ENCODE measurements at regions of chr2 and their contacts with region 1.

Region 1: DNA sequence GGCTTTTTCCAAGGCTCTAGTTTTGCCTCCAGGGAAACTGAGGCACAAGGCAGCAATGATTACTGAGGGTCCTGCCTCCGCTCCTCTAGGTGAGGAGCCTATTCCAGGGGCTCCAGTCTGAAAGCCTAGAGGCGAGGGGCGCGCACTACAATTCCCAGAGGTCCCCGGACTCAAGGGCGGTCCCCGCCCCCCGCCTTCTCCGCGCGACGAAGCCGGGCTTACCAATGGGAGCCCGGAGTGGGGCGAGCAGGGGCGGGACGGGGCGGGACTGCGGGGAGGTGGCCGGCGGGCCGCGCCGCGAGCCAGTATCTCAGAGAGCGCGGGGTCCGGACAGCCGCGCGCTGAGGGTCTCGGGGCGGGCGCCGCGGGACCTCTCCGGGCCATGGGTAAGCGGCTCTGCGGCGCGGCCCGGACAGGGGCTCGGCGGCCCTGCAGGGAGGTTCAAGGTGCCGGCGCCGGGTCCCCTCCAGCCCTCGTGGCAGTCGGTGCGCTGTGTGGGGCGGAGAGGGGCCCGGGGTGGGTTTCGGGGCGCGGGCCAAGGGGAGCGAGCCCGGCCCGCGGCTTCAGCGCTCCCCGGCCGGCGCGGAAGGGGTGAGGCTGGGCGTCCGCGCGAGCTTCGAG is at the start of gene ARID5A:
- DNase-seq: peak; percentile 88 to 95 (median 91)
- ATAC-seq: peak; percentile 48
- H3K4me3 ChIP-seq: peak within 1 kb of the TSS; percentile 90
- H3K4me3 Mint-ChIP-seq: peak within 1 kb of the TSS; percentile 99
- H3K27ac ChIP-seq: peak within 1 kb of the TSS; percentile 88 to 99
- H3K27ac Mint-ChIP-seq: peak within 1 kb of the TSS; percentile 99
- H3K4me1 ChIP-seq: peaks cover 76% of the 10 kb centered on the region
- H3K4me1 Mint-ChIP-seq: peaks cover 60% of the 10 kb centered on the region
- H3K27me3 ChIP-seq: no peaks in the 10 kb centered on the region
- H3K27me3 Mint-ChIP-seq: no peaks in the 10 kb centered on the region
- CTCF ChIP-seq: peak; percentile 53
- total RNA-seq, gene ARID5A: 326 to 342 TPM

Region 2: GRCh38 chr2:96145036-96145847 is 391.3 kb before region 1 on chr2 and contains the start of gene DUSP2:
- CTCF ChIA-PET with region 1: no interaction called
- POLR2A ChIA-PET with region 1: interaction called, 21 read pairs
- intact Hi-C with region 1: loop called (anchors 5 kb)
- DNase-seq: peak; percentile 71 to 96 (median 85)
- ATAC-seq: peak; percentile 33
- H3K4me3 ChIP-seq: peak within 1 kb of the TSS; percentile 93
- H3K4me3 Mint-ChIP-seq: peak within 1 kb of the TSS; percentile 98
- H3K27ac ChIP-seq: peak within 1 kb of the TSS; percentile 97 to 99
- H3K27ac Mint-ChIP-seq: peak within 1 kb of the TSS; percentile 98
- H3K4me1 ChIP-seq: peaks cover 73% of the 10 kb centered on the region
- H3K4me1 Mint-ChIP-seq: peaks cover 79% of the 10 kb centered on the region
- H3K27me3 ChIP-seq: no peaks in the 10 kb centered on the region
- H3K27me3 Mint-ChIP-seq: no peaks in the 10 kb centered on the region
- CTCF ChIP-seq: no peak
- total RNA-seq, gene DUSP2: 728 to 730 TPM

Region 3: GRCh38 chr2:96305091-96305978 is 231.2 kb before region 1 on chr2 and contains the start of gene SNRNP200:
- CTCF ChIA-PET with region 1: no interaction called
- POLR2A ChIA-PET with region 1: interaction called, 18 read pairs
- intact Hi-C with region 1: loop called (anchors 2 to 5 kb)
- DNase-seq: peak; percentile 83 to 97 (median 88)
- ATAC-seq: peak; percentile 83
- H3K4me3 ChIP-seq: peak within 1 kb of the TSS; percentile 100
- H3K4me3 Mint-ChIP-seq: peak within 1 kb of the TSS; percentile 94
- H3K27ac ChIP-seq: peak within 1 kb of the TSS; percentile 97
- H3K27ac Mint-ChIP-seq: peak within 1 kb of the TSS; percentile 97
- H3K4me1 ChIP-seq: peaks cover 48% of the 10 kb centered on the region
- H3K4me1 Mint-ChIP-seq: peaks cover 58% of the 10 kb centered on the region
- H3K27me3 ChIP-seq: no peaks in the 10 kb centered on the region
- H3K27me3 Mint-ChIP-seq: no peaks in the 10 kb centered on the region
- CTCF ChIP-seq: no peak
- total RNA-seq, gene SNRNP200: 274 to 297 TPM

Region 4: GRCh38 chr2:96407041-96407918 is 129.3 kb before region 1 on chr2:
- CTCF ChIA-PET with region 1: interaction called, 8 read pairs
- POLR2A ChIA-PET with region 1: interaction called, 107 read pairs
- intact Hi-C with region 1: loop called in 1 of 2 experiments (anchors 5 kb)
- DNase-seq: peak; percentile 58 to 91 (median 76)
- ATAC-seq: peak; percentile 93
- H3K4me3 ChIP-seq: no peak overlapping the region
- H3K4me3 Mint-ChIP-seq: peak overlapping the region; percentile 79
- H3K27ac ChIP-seq: peak overlapping the region; percentile 33 to 35
- H3K27ac Mint-ChIP-seq: peak overlapping the region; percentile 84
- H3K4me1 ChIP-seq: peaks cover 38% of the 10 kb centered on the region
- H3K4me1 Mint-ChIP-seq: peaks cover 41% of the 10 kb centered on the region
- H3K27me3 ChIP-seq: no peaks in the 10 kb centered on the region
- H3K27me3 Mint-ChIP-seq: no peaks in the 10 kb centered on the region
- CTCF ChIP-seq: peak; percentile 74

Region 5: DNA sequence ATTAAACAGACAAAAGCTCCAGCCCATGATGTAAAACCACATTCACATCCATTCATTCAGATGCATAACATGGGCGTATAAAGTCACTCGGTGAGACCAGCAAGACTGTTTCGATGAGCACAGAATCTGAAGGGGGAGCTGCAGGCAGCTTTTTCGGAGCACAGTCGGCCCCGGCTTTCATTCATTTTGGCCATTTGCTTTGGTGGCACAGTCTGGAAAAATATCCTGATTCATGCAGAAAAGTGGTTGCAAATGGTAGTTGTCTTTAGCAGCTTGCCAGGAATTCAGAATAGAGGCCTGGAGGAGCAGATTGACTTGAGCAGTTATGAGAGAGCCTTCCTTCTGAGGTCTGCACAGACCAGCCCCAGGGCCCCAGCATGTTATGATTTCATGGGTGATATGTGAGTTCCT is 11.2 kb after region 1 on chr2:
- CTCF ChIA-PET with region 1: interaction called, 3 read pairs
- POLR2A ChIA-PET with region 1: interaction called, 145 read pairs
- intact Hi-C with region 1: loop called in 1 of 2 experiments (anchors 2 kb)
- DNase-seq: no peak
- ATAC-seq: no peak
- H3K4me3 ChIP-seq: no peak overlapping the region
- H3K4me3 Mint-ChIP-seq: peak overlapping the region; percentile 21
- H3K27ac ChIP-seq: no peak overlapping the region
- H3K27ac Mint-ChIP-seq: peak overlapping the region; percentile 87
- H3K4me1 ChIP-seq: peaks cover 45% of the 10 kb centered on the region
- H3K4me1 Mint-ChIP-seq: peaks cover 51% of the 10 kb centered on the region
- H3K27me3 ChIP-seq: no peaks in the 10 kb centered on the region
- H3K27me3 Mint-ChIP-seq: no peaks in the 10 kb centered on the region
- CTCF ChIP-seq: no peak

Region 6: DNA sequence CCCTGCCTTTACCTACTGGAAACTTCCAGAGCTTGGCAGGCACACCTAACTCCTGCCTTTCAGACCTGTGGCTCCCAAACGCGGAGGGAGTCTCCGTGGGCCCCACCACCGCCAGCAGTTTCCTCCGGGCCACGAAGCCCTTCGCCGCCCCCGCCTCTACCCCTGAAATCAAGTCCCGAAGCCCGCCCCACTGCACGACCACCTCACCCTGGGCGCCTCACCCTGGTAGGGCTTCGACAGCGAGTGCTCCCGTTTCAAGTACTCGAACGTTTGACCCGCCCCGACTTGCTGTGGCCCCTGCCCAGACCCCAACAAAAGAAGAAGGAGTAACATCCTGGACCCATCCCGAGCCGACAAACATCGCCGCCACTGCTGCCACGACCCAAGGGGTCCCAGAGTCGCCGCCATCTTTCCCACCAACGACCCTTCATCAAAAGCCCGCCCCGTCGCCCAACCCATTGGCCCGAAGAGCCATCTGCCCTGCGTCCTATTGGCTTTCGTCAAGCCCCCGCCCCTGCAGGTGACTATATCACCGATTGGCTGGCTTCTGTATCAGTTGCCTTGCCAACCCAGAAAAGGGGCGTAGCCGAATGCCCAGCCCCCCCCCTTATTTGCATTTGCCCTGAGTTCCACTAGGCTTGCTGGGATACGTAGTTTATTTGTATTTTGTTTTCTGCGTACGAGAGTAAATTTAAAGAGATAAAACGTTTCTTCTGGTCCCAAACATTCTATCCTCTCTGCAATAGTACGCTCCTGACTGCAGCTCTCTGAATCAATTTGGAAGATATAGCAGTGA is 203.3 kb after region 1 on chr2 and contains the start of gene LMAN2L:
- CTCF ChIA-PET with region 1: no interaction called
- POLR2A ChIA-PET with region 1: no interaction called
- intact Hi-C with region 1: loop called in 1 of 2 experiments (anchors 5 kb)
- DNase-seq: peak; percentile 88 to 99 (median 96)
- ATAC-seq: peak; percentile 98
- H3K4me3 ChIP-seq: peak within 1 kb of the TSS; percentile 94
- H3K4me3 Mint-ChIP-seq: peak within 1 kb of the TSS; percentile 97
- H3K27ac ChIP-seq: peak within 1 kb of the TSS; percentile 21 to 78
- H3K27ac Mint-ChIP-seq: peak within 1 kb of the TSS; percentile 82
- H3K4me1 ChIP-seq: peaks cover 25% of the 10 kb centered on the region
- H3K4me1 Mint-ChIP-seq: peaks cover 35% of the 10 kb centered on the region
- H3K27me3 ChIP-seq: no peaks in the 10 kb centered on the region
- H3K27me3 Mint-ChIP-seq: no peaks in the 10 kb centered on the region
- CTCF ChIP-seq: no peak
- total RNA-seq, gene LMAN2L: 1.1 to 1.8 TPM

Region 7: GRCh38 chr2:96960153-96960961 is 423.8 kb after region 1 on chr2:
- CTCF ChIA-PET with region 1: interaction called, 3 read pairs
- POLR2A ChIA-PET with region 1: interaction called, 20 read pairs
- intact Hi-C with region 1: loop called in 1 of 2 experiments (anchors 5 kb)
- DNase-seq: peak; percentile 75 to 93 (median 84)
- ATAC-seq: no peak
- H3K4me3 ChIP-seq: no peak overlapping the region
- H3K4me3 Mint-ChIP-seq: peak overlapping the region; percentile 71
- H3K27ac ChIP-seq: no peak overlapping the region
- H3K27ac Mint-ChIP-seq: peak overlapping the region; percentile 93
- H3K4me1 ChIP-seq: peaks cover 56% of the 10 kb centered on the region
- H3K4me1 Mint-ChIP-seq: peaks cover 56% of the 10 kb centered on the region
- H3K27me3 ChIP-seq: no peaks in the 10 kb centered on the region
- H3K27me3 Mint-ChIP-seq: no peaks in the 10 kb centered on the region
- CTCF ChIP-seq: peak; percentile 96

Measured in CD4-positive, alpha-beta T cell (primary cell).